Activated CD4-positive, alpha-beta T cell treated with anti-CD3 and anti-CD28 coated beads for 36 hours (primary cell): ENCODE measurements at regions of chr2 and their contacts with region 1.

Region 1: DNA sequence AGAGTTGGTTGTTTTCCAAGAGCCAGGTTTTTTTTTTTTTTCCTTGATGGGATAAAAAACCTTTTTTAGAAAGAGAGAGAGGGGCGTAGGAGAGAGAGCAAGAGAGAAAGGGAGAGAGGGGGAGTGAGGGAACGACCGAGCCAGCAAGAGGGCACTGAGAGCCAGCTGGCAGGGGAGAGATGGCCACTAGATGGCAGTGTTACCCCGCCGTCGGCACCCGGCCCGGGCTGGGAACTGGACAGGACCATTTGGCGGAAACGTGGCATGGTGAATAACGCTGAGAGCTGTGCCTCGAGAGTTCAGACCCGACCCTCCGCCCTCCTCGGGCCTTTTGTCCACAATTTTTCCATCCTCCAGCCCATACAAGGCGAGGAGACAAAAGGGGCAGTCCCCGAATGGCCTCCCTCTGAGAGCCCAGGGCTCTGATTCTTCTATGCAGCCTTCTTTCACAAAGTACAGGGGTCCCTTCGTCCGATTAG is 286.7 kb upstream of the VRK2 start:
- DNase-seq: peak; percentile 86
- ATAC-seq: peak; percentile 93
- H3K4me3 Mint-ChIP-seq: no peak overlapping the region
- H3K27ac Mint-ChIP-seq: no peak overlapping the region
- H3K4me1 Mint-ChIP-seq: no peaks in the 10 kb centered on the region
- H3K27me3 Mint-ChIP-seq: peaks cover 3% of the 10 kb centered on the region

Region 2: DNA sequence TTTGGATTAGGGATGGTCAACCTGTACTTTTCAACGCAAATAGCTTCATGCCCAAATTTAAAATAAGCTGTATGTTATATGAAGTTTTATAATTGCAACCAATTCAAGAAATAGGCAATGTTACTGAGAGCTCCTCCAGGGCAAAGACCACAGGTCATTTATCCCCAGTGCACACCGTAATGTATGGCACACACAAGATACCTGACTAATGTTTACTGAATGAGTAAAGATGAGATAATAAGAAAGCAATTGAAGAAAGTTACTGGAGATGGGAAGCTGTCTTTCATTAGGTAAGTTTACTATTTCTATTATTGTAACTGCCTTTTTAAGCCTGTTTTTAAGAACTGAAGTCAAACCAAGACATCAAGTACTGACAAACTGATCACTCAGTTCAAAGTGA is 102.3 kb after region 1 on chr2:
- CTCF ChIA-PET with region 1: no interaction called
- POLR2A ChIA-PET with region 1: no interaction called
- intact Hi-C with region 1: no loop called
- DNase-seq: no peak
- ATAC-seq: no peak
- H3K4me3 Mint-ChIP-seq: no peak overlapping the region
- H3K27ac Mint-ChIP-seq: no peak overlapping the region
- H3K4me1 Mint-ChIP-seq: no peaks in the 10 kb centered on the region
- H3K27me3 Mint-ChIP-seq: no peaks in the 10 kb centered on the region

Region 3: DNA sequence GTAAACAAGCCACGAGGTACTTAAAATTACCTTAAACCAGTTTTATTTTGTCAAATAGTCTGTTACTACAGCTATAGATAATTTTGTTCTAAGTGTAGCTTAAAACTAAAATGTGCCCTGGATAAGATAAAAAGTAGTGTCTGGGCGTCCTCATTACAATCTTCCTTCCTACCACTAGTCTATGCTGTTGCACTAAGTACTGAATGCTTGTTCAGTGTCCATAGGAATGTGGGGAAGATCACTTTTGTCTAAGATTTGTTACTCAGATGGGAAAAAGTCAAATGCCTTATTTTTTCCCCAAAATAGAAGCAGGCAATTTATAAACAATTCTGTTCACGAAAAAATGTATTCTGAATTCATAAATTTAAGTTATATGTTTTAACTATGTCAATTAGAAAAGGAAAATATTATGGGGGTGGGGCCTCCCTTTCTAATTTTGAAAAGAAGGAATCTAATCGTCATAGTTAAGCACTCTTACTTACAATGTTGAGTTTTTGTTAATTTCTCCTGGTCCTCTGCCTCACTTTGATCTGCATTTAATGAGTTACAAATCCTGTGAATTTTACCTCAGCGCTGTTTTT is 146.4 kb after region 1 on chr2:
- CTCF ChIA-PET with region 1: interaction called, 4 read pairs
- POLR2A ChIA-PET with region 1: no interaction called
- intact Hi-C with region 1: loop called in 1 of 2 experiments (anchors 5 kb)
- DNase-seq: no peak
- ATAC-seq: peak; percentile 84
- H3K4me3 Mint-ChIP-seq: no peak overlapping the region
- H3K27ac Mint-ChIP-seq: no peak overlapping the region
- H3K4me1 Mint-ChIP-seq: peaks cover 9% of the 10 kb centered on the region
- H3K27me3 Mint-ChIP-seq: no peaks in the 10 kb centered on the region

Region 4: GRCh38 chr2:58448065-58448507 is 688.2 kb after region 1 on chr2:
- CTCF ChIA-PET with region 1: interaction called, 3 read pairs
- POLR2A ChIA-PET with region 1: no interaction called
- intact Hi-C with region 1: loop called (anchors 2 to 10 kb)
- DNase-seq: peak; percentile 51
- ATAC-seq: no peak
- H3K4me3 Mint-ChIP-seq: no peak overlapping the region
- H3K27ac Mint-ChIP-seq: no peak overlapping the region
- H3K4me1 Mint-ChIP-seq: no peaks in the 10 kb centered on the region
- H3K27me3 Mint-ChIP-seq: peaks cover 6% of the 10 kb centered on the region

Region 5: DNA sequence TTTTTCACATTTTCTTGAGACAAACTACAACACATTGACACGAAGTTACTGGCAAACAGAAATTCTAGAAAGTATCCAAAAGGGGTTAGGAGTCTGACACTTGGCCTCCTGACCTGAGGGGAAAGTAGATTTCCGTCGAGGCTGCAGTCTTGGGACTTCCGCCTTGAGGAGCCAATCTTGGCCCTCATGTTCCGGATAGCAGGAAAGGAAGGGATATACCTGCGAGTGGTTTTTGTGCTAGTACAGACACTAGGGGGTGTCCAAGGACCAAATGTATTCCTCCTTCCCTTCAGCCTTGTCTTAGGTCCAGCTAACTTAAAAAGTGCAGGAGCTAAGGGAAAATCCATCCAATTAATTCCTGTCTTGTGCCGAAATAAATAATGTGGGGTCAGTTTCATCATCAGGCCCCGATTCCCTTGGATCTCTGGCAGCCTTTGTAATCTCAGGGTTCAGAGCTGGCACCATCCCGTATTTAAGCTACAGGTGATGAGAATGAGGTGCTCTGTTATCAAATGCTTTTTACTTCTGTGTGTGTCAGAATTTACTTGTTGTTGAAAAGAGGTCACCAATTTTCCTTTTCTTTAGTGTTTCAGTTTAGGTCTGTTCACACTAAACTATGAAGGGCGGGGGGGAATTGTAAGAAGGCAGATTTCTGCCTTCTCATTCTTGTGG is 811.5 kb after region 1 on chr2:
- CTCF ChIA-PET with region 1: no interaction called
- POLR2A ChIA-PET with region 1: no interaction called
- intact Hi-C with region 1: loop called in 1 of 2 experiments (anchors 5 kb)
- DNase-seq: peak; percentile 22
- ATAC-seq: peak; percentile 66
- H3K4me3 Mint-ChIP-seq: no peak overlapping the region
- H3K27ac Mint-ChIP-seq: no peak overlapping the region
- H3K4me1 Mint-ChIP-seq: peaks cover 2% of the 10 kb centered on the region
- H3K27me3 Mint-ChIP-seq: no peaks in the 10 kb centered on the region

Region 6: DNA sequence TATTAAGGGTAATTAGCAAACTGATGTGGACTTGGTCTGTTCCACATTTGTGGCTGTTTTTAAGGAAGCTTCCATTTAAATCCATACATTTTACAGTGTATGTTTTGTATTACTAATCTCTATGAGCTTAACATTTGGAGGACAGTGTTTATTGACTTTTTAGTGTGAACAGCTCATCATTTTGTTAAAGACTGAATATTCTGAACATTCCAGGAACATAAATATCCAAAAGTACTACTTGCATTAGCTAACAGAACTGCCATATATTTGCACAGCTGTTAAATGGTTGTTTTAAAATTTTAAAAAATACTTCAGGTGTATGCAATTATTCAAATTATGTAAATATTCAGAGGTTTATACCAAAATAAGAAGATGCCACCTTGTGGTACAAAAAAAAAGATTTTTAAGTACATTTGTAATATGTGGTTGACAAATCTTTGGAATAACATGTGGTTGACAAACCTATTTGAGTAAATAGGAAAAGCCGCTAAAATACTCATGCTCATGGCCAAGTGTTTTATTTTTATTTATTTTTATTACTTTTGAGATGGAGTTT is 921.0 kb after region 1 on chr2:
- CTCF ChIA-PET with region 1: no interaction called
- POLR2A ChIA-PET with region 1: no interaction called
- intact Hi-C with region 1: loop called in 1 of 2 experiments (anchors 5 kb)
- DNase-seq: no peak
- ATAC-seq: no peak
- H3K4me3 Mint-ChIP-seq: no peak overlapping the region
- H3K27ac Mint-ChIP-seq: no peak overlapping the region
- H3K4me1 Mint-ChIP-seq: no peaks in the 10 kb centered on the region
- H3K27me3 Mint-ChIP-seq: no peaks in the 10 kb centered on the region

Region 7: DNA sequence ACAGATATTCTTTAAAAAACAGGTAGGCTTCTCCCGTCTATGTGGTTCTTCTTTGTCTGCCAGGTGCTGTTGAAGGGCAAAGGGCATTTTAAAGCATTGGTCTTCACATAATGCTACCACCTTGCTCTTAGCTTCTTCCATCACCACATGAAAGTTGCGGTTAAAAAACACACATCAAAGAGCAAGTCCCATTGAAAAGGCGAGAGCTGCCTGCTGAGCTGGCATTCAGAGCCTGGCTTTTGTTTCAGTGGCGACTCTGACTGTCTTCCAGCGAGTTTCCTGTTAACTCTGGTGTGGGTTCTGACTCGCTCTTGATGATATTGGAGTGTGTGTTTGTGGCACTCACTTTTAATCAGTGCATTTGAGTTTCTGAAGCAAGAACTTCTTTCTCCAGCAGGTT is 1106.2 kb after region 1 on chr2:
- CTCF ChIA-PET with region 1: no interaction called
- POLR2A ChIA-PET with region 1: no interaction called
- intact Hi-C with region 1: loop called in 1 of 2 experiments (anchors 10 kb)
- DNase-seq: peak; percentile 41
- ATAC-seq: peak; percentile 72
- H3K4me3 Mint-ChIP-seq: no peak overlapping the region
- H3K27ac Mint-ChIP-seq: no peak overlapping the region
- H3K4me1 Mint-ChIP-seq: peaks cover 16% of the 10 kb centered on the region
- H3K27me3 Mint-ChIP-seq: peaks cover 2% of the 10 kb centered on the region

Region 8: DNA sequence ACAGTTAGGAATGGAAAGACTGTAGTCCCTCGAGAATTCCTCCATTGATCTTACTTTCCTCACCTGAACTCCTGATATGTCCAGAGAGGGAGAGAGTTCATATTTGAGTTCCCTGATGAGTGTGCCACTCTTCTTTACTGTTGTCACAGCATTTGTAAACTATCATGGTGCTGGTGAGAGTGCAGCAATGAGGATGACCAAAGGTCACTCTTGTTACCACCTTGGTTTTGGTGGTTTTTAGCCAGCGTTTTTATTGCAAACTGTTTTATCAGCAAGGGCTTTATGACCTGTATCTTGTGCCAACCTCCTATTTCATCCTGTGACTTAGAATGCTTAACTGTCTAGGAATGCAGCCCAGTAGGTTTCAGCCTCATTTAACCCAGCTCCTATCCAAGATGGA is 1731.1 kb after region 1 on chr2:
- CTCF ChIA-PET with region 1: no interaction called
- POLR2A ChIA-PET with region 1: no interaction called
- intact Hi-C with region 1: loop called in 1 of 2 experiments (anchors 5 kb)
- DNase-seq: no peak
- ATAC-seq: no peak
- H3K4me3 Mint-ChIP-seq: no peak overlapping the region
- H3K27ac Mint-ChIP-seq: no peak overlapping the region
- H3K4me1 Mint-ChIP-seq: no peaks in the 10 kb centered on the region
- H3K27me3 Mint-ChIP-seq: no peaks in the 10 kb centered on the region